IMR-90 (cell line): ENCODE measurements at regions of chr22 and their contacts with region 1.

Region 1: GRCh38 chr22:43151251-43152002 is at the start of gene TSPO:
- DNase-seq: peak; percentile 19
- ATAC-seq: peak; percentile 85
- H3K4me3 ChIP-seq: peak within 1 kb of the TSS; percentile 76
- H3K27ac ChIP-seq: peak within 1 kb of the TSS; percentile 82
- H3K4me1 ChIP-seq: peaks cover 10% of the 10 kb centered on the region
- H3K27me3 ChIP-seq: no peaks in the 10 kb centered on the region
- CTCF ChIP-seq: no peak
- POLR2A ChIP-seq: no peak
- RAD21 ChIP-seq: no peak
- total RNA-seq, gene TSPO: 94.7 and 115 TPM in 2 replicates

Region 2: DNA sequence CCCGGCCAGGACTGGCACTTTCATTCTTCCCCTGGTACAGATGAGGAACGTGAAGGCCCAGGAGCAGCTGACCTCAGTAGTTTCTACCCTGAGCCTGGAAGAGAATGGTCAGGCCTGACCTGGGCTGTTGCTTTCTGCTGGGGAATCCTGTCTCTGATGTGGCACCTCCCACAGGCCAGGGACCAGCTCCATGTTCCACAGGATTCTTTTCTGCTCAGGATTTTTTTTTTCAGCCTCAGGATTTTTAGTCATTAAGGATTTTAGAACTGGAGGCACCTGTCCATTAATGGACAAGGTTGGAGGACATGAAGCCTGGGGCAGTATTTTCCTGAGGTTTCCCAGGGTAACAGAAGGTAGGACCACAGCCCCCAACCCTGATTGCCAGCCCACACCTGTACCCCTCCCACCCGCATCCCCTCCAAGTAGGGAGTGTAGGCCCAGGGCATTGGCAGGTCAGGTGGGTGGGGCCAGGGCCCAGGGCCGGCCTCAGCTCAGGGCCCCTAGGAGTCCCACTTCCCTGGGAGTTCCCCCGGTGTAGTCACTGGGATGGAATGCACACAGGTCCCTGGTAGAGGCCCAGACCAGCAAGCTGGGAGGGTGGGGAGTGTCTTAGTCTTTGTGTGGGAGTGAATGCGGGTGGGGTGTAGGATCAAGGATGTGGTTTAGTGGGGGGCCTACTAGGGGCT is 24.8 kb before region 1 on chr22:
- CTCF ChIA-PET with region 1: interaction called, 4 read pairs
- POLR2A ChIA-PET with region 1: interaction called, 17 read pairs
- dilution Hi-C with region 1: no loop called
- in situ Hi-C with region 1: no loop called
- intact Hi-C with region 1: no loop called
- DNase-seq: peak; percentile 85
- ATAC-seq: peak; percentile 94
- H3K4me3 ChIP-seq: no peak overlapping the region
- H3K27ac ChIP-seq: no peak overlapping the region
- H3K4me1 ChIP-seq: peaks cover 12% of the 10 kb centered on the region
- H3K27me3 ChIP-seq: no peaks in the 10 kb centered on the region
- CTCF ChIP-seq: no peak
- POLR2A ChIP-seq: no peak
- RAD21 ChIP-seq: no peak

Region 3: GRCh38 chr22:43187171-43188099 is 36.0 kb after region 1 on chr22:
- CTCF ChIA-PET with region 1: interaction called, 3 read pairs
- POLR2A ChIA-PET with region 1: interaction called, 19 read pairs
- dilution Hi-C with region 1: no loop called
- in situ Hi-C with region 1: no loop called
- intact Hi-C with region 1: no loop called
- DNase-seq: peak; percentile 92
- ATAC-seq: peak; percentile 88
- H3K4me3 ChIP-seq: peak overlapping the region; percentile 47
- H3K27ac ChIP-seq: peak overlapping the region; percentile 81
- H3K4me1 ChIP-seq: peaks cover 11% of the 10 kb centered on the region
- H3K27me3 ChIP-seq: peaks cover 3% of the 10 kb centered on the region
- CTCF ChIP-seq: peak; percentile 91
- POLR2A ChIP-seq: peak; percentile 57; the same call in 1 of the 2 replicates
- RAD21 ChIP-seq: peak; percentile 37

Region 4: DNA sequence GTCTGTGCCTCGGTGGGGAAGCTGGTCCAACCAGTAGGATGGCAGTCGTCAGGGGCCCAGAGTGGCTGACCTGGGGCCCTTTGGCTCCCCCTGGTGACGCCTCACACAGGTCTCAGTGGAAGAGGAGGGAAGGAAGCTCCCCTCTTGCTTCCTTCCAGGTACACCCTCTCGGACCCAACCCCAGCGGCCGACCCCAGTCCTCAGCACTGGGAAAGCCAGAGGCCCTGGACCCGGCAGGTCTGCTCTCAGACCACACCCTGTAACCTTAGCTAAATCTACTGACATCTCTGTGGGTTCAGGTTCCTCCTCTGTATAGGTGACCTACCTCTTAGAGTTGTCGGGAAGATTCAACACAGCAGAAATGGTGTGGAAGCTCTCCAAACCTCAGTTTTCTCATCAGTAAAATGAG is 195.1 kb after region 1 on chr22:
- CTCF ChIA-PET with region 1: no interaction called
- POLR2A ChIA-PET with region 1: interaction called, 10 read pairs
- dilution Hi-C with region 1: no loop called
- in situ Hi-C with region 1: no loop called
- intact Hi-C with region 1: no loop called
- DNase-seq: no peak
- ATAC-seq: peak; percentile 73
- H3K4me3 ChIP-seq: no peak overlapping the region
- H3K27ac ChIP-seq: no peak overlapping the region
- H3K4me1 ChIP-seq: no peaks in the 10 kb centered on the region
- H3K27me3 ChIP-seq: peaks cover 55% of the 10 kb centered on the region
- CTCF ChIP-seq: peak; percentile 48
- POLR2A ChIP-seq: no peak
- RAD21 ChIP-seq: peak; percentile 48

Region 5: DNA sequence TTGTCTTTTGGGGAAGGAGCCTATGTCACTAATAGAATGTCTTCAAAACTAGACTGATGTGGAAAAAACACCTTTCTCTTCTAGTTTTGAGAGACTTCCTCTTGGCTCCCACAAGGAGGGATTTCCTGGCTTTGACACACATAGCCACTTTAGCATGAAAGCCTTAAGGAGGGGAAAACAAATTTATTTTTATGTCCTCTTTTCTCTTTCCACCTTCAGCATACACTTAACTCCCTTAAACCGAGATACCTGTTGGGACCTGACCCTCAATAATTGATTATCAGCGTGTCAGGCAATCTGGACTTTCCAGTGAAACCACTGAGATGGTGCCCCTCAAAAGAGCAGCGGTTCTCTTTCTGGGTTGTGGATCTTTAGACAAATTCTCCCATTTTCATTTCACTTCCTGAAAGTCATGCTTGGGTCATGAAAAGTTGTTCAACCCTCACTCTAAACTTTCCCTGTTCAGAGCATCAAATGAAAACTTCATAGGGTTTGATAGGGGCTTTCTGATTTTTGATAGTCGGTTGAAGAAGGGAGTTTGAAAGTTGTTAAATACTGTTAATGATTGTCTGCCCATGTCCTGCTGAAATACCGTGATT is 651.6 kb after region 1 on chr22:
- CTCF ChIA-PET with region 1: no interaction called
- POLR2A ChIA-PET with region 1: no interaction called
- dilution Hi-C with region 1: no loop called
- in situ Hi-C with region 1: no loop called
- intact Hi-C with region 1: no loop called
- DNase-seq: no peak
- ATAC-seq: no peak
- H3K4me3 ChIP-seq: no peak overlapping the region
- H3K27ac ChIP-seq: no peak overlapping the region
- H3K4me1 ChIP-seq: no peaks in the 10 kb centered on the region
- H3K27me3 ChIP-seq: peaks cover 3% of the 10 kb centered on the region; the same call in 1 of the 2 replicates
- CTCF ChIP-seq: no peak
- POLR2A ChIP-seq: no peak
- RAD21 ChIP-seq: no peak